Ascending aorta (tissue), 2 donors: ENCODE measurements at regions of chr5 and their contacts with region 1.

Region 1: DNA sequence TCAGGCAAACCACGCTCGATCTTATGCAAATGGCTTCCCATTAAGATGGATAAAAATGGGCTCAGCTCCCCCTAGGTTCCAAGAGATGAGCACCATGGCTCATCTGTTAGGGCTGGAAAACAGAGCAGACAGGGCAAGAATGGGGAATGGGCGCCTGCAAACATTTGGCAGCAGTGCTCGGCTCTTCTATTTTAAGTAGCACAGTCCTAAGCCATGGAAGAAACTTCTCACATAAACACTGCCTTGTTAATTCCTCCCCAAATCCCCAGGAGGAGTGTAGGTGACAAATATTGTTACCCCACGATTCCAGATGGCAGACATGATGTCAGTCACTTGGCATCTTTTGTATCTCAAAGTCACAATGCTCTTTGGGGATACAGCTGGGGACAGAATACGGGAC is 221.8 kb downstream of the ICE1 start:
- DNase-seq: no peak
- H3K4me3 ChIP-seq: no peak overlapping the region
- H3K27ac ChIP-seq: peak overlapping the region in 1 of 2 donors; percentile 14
- H3K4me1 ChIP-seq: peaks cover 0 to 6% of the 10 kb centered on the region in 2 donors
- H3K27me3 ChIP-seq: no peaks in the 10 kb centered on the region
- CTCF ChIP-seq: no peak

Region 2: DNA sequence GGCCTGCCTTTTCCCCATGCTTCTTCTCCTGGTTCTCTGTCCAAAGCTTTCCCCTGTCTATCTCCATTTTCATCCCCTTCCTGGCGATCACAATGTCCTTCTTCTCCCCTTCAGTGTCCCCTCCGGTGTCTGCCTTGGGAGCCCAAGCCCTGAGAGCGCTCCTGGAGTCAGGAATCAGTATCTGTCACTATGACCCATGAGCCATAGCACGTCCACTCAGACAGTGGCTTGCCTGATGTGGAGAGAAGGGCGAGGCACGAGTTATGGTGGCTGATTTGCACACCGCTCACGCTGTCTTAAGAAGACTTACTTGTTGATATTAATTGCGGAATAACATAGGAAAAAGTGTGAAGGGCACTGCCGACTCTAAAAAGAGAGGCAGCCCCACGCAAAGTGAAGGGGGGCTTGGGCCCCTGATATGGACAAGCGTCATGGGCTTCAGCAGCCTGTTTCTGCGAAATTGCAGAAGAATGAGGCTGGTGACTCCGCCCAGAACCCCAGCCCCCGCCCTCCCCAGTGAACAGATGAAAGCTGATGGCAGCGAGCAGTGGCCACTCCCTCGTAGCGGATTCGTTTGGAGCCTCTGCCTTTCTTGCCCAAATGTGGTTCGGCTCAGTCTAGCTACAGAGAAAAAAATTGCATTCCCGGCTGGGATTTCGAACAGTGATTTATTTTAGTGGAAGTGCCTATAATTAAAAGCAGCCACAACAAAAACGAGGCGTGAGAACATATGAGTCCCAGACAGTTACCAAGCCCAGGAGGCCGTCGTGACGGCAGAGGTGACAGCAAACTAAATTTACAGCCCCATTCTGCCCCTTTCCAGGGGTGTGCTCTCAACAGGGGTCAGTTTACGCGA is 72.0 kb before region 1 on chr5:
- intact Hi-C with region 1: loop called (anchors 5 kb)
- DNase-seq: peak; percentile 51 to 91
- H3K4me3 ChIP-seq: peak overlapping the region; percentile 1 to 49
- H3K27ac ChIP-seq: peak overlapping the region; percentile 81 to 84
- H3K4me1 ChIP-seq: peaks cover 8 to 24% of the 10 kb centered on the region in 2 donors
- H3K27me3 ChIP-seq: no peaks in the 10 kb centered on the region
- CTCF ChIP-seq: no peak